Psoas muscle (tissue), 8 donors: ENCODE measurements at regions of chr12 and their contacts with region 1.

Region 1: DNA sequence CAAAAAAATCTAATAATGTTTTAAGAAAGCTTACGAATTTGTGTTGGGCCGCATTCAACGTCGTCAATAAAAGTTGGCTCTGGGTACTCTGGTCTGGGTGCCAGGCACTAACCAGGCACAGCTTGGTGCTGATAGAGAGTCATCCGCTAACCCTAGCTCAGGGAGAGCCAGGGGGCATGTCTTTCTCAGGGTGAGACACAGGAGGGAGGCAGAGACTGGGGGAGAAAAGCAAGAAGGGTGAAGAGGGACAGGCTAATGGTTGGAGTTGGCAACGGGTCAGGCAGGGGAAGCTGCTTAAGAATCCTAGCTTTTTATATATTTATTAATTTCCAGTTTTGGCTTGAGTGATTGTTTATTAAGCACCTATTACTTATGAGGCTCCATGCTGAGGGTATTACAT is 105.0 kb downstream of the CMKLR1 start:
- DNase-seq: peak; percentile 19 to 58
- ATAC-seq: no peak
- H3K4me3 ChIP-seq: no peak overlapping the region
- H3K27ac ChIP-seq: no peak overlapping the region
- H3K4me1 ChIP-seq: no peaks in the 10 kb centered on the region
- H3K27me3 ChIP-seq: no peaks in the 10 kb centered on the region
- CTCF ChIP-seq: peak; percentile 9

Region 2: GRCh38 chr12:108457006-108457733 is 223.0 kb after region 1 on chr12:
- intact Hi-C with region 1: loop called in 1 of 2 experiments (anchors 10 kb)
- DNase-seq: no peak
- ATAC-seq: peak in 1 of 4 donors; percentile 49
- H3K4me3 ChIP-seq: no peak overlapping the region
- H3K27ac ChIP-seq: no peak overlapping the region
- H3K4me1 ChIP-seq: no peaks in the 10 kb centered on the region
- H3K27me3 ChIP-seq: peaks cover 2 to 4% (median 2%) of the 10 kb centered on the region in 3 donors
- CTCF ChIP-seq: peak; percentile 29